Naive thymus-derived CD4-positive, alpha-beta T cell (primary cell): ENCODE measurements at regions of chr4 and their contacts with region 1.

Region 1: DNA sequence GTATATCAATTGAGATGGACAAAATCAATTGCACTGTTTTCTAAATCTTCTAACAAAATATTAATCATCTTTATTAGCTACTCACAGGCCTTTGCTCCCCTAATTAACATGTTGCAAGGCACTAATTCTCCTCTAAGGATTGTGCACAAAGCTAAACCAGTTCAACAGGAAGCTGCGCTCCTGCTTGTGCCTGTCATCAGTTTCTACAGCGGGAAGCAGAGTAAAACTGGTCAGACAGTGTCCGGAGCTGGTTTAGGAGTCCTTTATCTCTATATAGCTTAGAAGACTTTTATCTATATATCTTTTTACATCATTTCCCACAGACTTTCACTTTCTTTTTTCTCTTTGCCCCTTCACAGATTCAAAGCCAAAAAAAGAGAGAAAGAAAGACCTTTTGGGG is 79.1 kb downstream of the ELOVL6 start:
- DNase-seq: peak in 1 of 9 donors; percentile 1
- ATAC-seq: peak; percentile 38
- H3K4me3 ChIP-seq: no peak overlapping the region
- H3K4me3 Mint-ChIP-seq: no peak overlapping the region
- H3K27ac ChIP-seq: no peak overlapping the region
- H3K27ac Mint-ChIP-seq: peak overlapping the region in 1 of 9 donors; percentile 33
- H3K4me1 ChIP-seq: peaks cover 0 to 7% of the 10 kb centered on the region in 2 donors
- H3K4me1 Mint-ChIP-seq: peaks cover 2 to 28% (median 8%) of the 10 kb centered on the region in 7 donors
- H3K27me3 ChIP-seq: no peaks in the 10 kb centered on the region
- H3K27me3 Mint-ChIP-seq: no peaks in the 10 kb centered on the region

Region 2: GRCh38 chr4:109754093-109754857 is 365.1 kb before region 1 on chr4:
- CTCF ChIA-PET with region 1: no interaction called
- POLR2A ChIA-PET with region 1: no interaction called
- intact Hi-C with region 1: no loop called
- DNase-seq: peak in 6 of 9 donors; percentile 10 to 53 (median 36)
- ATAC-seq: peak; percentile 10
- H3K4me3 ChIP-seq: no peak overlapping the region
- H3K4me3 Mint-ChIP-seq: no peak overlapping the region
- H3K27ac ChIP-seq: no peak overlapping the region
- H3K27ac Mint-ChIP-seq: peak overlapping the region in 3 of 9 donors; percentile 21 to 48 (median 29)
- H3K4me1 ChIP-seq: no peaks in the 10 kb centered on the region
- H3K4me1 Mint-ChIP-seq: no peaks in the 10 kb centered on the region
- H3K27me3 ChIP-seq: no peaks in the 10 kb centered on the region
- H3K27me3 Mint-ChIP-seq: peaks cover 0 to 13% (median 6%) of the 10 kb centered on the region in 5 donors

Region 3: DNA sequence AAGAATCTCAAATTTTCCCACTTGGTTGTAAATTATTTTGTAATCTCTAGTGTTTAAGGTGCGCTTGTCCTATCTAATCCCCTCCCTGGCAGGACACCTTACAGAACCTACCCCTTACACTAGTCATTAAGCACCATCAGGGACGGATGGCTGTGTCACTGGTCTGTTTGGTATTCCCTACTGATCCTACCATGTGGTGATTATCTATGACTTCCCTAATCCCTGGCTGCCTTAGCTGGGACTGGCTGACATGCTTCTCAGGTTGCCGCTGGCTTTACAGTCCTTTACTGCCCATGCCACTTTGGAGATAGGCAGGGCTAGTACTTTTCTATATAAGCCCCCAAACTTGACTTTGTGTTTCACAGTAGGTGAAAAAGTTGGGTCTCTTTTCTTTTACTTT is 20.5 kb after region 1 on chr4:
- CTCF ChIA-PET with region 1: no interaction called
- POLR2A ChIA-PET with region 1: interaction called, 3 read pairs
- intact Hi-C with region 1: loop called in 1 of 2 experiments (anchors 1 kb)
- DNase-seq: no peak
- ATAC-seq: no peak
- H3K4me3 ChIP-seq: no peak overlapping the region
- H3K4me3 Mint-ChIP-seq: no peak overlapping the region
- H3K27ac ChIP-seq: no peak overlapping the region
- H3K27ac Mint-ChIP-seq: peak overlapping the region in 1 of 9 donors; percentile 0
- H3K4me1 ChIP-seq: no peaks in the 10 kb centered on the region
- H3K4me1 Mint-ChIP-seq: peaks cover 0 to 8% (median 0%) of the 10 kb centered on the region in 7 donors
- H3K27me3 ChIP-seq: no peaks in the 10 kb centered on the region
- H3K27me3 Mint-ChIP-seq: no peaks in the 10 kb centered on the region

Region 4: DNA sequence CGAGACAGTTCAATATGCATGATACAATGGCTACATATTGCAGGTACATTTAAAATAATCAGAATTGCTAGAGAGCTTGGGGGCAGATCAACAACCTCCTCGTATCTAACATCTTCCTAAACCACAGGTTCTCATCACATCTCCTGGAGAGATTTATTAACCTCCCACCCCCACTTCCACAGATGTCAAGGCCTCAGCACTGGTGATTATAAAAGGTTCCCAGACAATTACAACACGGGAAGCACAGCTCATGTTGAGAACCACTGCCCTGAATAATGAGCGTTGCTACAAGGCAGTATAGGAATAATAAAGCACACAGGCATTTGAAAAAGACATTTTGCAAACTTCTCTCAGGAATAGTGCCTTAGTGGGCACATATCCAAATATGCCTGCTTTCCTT is 36.3 kb after region 1 on chr4:
- CTCF ChIA-PET with region 1: no interaction called
- POLR2A ChIA-PET with region 1: no interaction called
- intact Hi-C with region 1: loop called in 1 of 2 experiments (anchors 5 kb)
- DNase-seq: no peak
- ATAC-seq: no peak
- H3K4me3 ChIP-seq: no peak overlapping the region
- H3K4me3 Mint-ChIP-seq: no peak overlapping the region
- H3K27ac ChIP-seq: no peak overlapping the region
- H3K27ac Mint-ChIP-seq: no peak overlapping the region
- H3K4me1 ChIP-seq: no peaks in the 10 kb centered on the region
- H3K4me1 Mint-ChIP-seq: peaks cover 0 to 15% (median 0%) of the 10 kb centered on the region in 7 donors
- H3K27me3 ChIP-seq: no peaks in the 10 kb centered on the region
- H3K27me3 Mint-ChIP-seq: no peaks in the 10 kb centered on the region

Region 5: DNA sequence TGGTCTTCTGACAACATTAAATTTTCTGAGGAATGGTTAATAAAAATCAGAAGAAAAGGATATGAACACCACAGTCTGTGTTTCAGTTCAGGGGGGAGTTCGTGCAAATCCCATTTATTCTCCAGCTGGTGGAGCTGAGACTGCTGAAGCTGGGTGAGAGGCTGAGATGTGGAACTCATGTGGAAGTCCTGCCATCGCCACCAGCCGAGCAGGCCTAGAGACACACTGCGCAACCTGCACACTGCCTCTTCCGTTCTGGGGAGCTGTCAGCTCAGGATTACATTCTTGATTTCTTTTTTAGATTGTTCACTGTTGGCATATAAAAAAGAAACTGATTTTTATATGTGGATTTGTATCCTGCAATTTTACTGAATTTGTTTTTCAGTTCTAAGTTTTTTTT is 145.7 kb after region 1 on chr4:
- CTCF ChIA-PET with region 1: no interaction called
- POLR2A ChIA-PET with region 1: no interaction called
- intact Hi-C with region 1: no loop called
- DNase-seq: no peak
- ATAC-seq: no peak
- H3K4me3 ChIP-seq: no peak overlapping the region
- H3K4me3 Mint-ChIP-seq: no peak overlapping the region
- H3K27ac ChIP-seq: no peak overlapping the region
- H3K27ac Mint-ChIP-seq: no peak overlapping the region
- H3K4me1 ChIP-seq: no peaks in the 10 kb centered on the region
- H3K4me1 Mint-ChIP-seq: peaks cover 0 to 10% (median 0%) of the 10 kb centered on the region in 7 donors
- H3K27me3 ChIP-seq: no peaks in the 10 kb centered on the region
- H3K27me3 Mint-ChIP-seq: peaks cover 0 to 33% (median 0%) of the 10 kb centered on the region in 5 donors